Activated B cell treated with CpG ODN at 0.5 μM for 24 hours (primary cell): ENCODE measurements at regions of chr17 and their contacts with region 1.

Region 1: DNA sequence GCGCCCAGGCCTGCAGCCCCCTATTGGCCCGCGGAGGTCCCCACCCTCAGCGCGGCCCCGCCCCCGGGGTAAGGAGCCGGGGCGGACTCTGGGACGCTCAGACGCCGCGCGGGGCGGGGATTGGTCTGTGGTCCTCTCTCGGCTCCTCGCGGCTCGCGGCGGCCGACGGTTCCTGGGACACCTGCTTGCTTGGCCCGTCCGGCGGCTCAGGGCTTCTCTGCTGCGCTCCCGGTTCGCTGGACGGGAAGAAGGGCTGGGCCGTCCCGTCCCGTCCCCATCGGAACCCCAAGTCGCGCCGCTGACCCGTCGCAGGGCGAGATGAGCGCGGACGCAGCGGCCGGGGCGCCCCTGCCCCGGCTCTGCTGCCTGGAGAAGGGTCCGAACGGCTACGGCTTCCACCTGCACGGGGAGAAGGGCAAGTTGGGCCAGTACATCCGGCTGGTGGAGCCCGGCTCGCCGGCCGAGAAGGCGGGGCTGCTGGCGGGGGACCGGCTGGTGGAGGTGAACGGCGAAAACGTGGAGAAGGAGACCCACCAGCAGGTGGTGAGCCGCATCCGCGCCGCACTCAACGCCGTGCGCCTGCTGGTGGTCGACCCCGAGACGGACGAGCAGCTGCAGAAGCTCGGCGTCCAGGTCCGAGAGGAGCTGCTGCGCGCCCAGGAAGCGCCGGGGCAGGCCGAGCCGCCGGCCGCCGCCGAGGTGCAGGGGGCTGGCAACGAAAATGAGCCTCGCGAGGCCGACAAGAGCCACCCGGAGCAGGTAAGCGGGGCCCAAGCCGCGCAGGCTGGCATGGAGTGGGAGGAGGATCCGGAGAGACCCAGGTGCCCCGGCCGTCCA is at the start of gene NHERF1:
- DNase-seq: peak; percentile 97
- ATAC-seq: peak; percentile 96
- H3K4me3 Mint-ChIP-seq: peak within 1 kb of the TSS; percentile 89
- H3K27ac Mint-ChIP-seq: peak within 1 kb of the TSS; percentile 72
- H3K4me1 Mint-ChIP-seq: peaks cover 64% of the 10 kb centered on the region
- H3K27me3 Mint-ChIP-seq: no peaks in the 10 kb centered on the region
- CTCF ChIP-seq: no peak
- total RNA-seq, gene NHERF1: 33.3 and 34.5 TPM in 2 replicates

Region 2: GRCh38 chr17:74736513-74737298 is 12.0 kb before region 1 on chr17 and contains the start of gene RAB37:
- CTCF ChIA-PET with region 1: interaction called, 23 read pairs
- POLR2A ChIA-PET with region 1: interaction called, 76 read pairs
- intact Hi-C with region 1: no loop called
- DNase-seq: peak; percentile 74
- ATAC-seq: peak; percentile 73
- H3K4me3 Mint-ChIP-seq: peak within 1 kb of the TSS; percentile 85
- H3K27ac Mint-ChIP-seq: peak within 1 kb of the TSS; percentile 88
- H3K4me1 Mint-ChIP-seq: peaks cover 49% of the 10 kb centered on the region
- H3K27me3 Mint-ChIP-seq: no peaks in the 10 kb centered on the region
- CTCF ChIP-seq: no peak
- total RNA-seq, gene RAB37: 11.0 and 11.1 TPM in 2 replicates

Region 3: DNA sequence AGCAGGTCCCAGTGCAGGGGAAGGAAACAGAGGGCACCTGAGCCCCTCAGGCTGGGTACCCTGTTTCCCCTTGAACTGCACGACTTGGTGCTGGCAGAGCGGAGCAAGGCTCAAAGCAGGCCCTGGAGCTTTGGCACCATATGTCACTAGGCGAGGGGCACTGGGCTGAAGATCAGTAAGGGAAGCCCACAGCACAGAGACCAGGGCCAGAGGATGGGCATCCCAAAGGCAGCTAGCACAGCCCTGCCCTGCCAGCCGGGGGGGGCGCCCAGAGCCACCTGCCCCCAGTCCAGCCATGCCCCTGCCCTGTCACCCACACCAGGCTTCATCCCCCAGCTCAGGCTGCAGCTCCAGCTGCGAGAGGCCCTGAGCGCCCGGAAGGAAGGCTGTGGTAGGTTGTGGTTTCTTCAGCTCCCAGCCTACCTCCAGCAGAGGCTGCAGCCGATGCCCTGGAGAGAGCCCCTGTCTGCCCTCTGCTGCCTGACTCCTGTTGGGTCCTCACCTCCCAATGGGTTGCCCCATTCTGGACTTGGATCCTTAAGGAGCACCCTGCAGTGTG is 10.6 kb after region 1 on chr17:
- CTCF ChIA-PET with region 1: interaction called, 22 read pairs
- POLR2A ChIA-PET with region 1: interaction called, 22 read pairs
- intact Hi-C with region 1: loop called (anchors 1 kb)
- DNase-seq: no peak
- ATAC-seq: peak; percentile 69
- H3K4me3 Mint-ChIP-seq: peak overlapping the region; percentile 41
- H3K27ac Mint-ChIP-seq: no peak overlapping the region
- H3K4me1 Mint-ChIP-seq: peaks cover 58% of the 10 kb centered on the region
- H3K27me3 Mint-ChIP-seq: no peaks in the 10 kb centered on the region
- CTCF ChIP-seq: no peak

Region 4: DNA sequence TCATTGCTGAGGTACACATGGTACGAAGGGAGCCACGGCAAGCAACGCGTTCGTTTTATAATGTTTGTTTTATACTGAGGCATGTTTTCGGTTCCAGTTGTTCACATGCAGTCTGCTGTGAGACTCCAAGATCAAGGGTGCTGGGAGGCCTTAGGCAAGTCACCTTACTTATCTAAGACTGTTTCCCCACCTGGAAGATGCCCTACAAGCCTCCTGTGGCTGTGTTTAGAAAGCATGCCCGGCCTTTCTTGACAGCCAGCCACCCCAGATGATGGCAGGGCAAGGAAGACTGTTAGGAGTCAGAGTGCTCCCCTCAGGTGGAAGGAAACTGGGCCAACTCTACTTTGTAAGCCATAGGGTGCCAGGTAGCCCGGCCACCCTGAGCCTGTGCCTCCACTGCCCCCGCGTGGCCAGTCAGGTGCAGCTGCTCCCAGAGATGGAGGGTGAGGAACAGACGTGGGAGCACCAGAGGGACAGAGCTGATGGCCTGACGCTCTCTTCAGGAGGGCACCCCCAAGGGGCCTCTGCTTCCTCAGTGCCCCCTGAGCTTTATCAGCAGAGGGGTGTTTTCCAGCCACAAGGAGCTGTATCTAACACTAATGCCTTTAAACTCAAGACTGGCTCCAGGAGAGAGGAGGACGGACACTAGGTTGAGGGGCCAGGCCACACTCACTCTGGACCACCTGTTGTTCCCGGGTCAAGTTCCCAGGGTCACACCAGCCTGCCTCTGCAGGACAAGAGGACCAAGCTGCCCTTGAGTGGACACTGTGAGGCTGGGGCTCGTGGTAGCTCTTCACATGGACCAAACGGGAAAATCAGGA is 22.0 kb after region 1 on chr17:
- CTCF ChIA-PET with region 1: interaction called, 53 read pairs
- POLR2A ChIA-PET with region 1: interaction called, 29 read pairs
- intact Hi-C with region 1: loop called (anchors 1 kb)
- DNase-seq: peak; percentile 57
- ATAC-seq: peak; percentile 97
- H3K4me3 Mint-ChIP-seq: no peak overlapping the region
- H3K27ac Mint-ChIP-seq: peak overlapping the region; percentile 46
- H3K4me1 Mint-ChIP-seq: peaks cover 18% of the 10 kb centered on the region
- H3K27me3 Mint-ChIP-seq: no peaks in the 10 kb centered on the region
- CTCF ChIP-seq: no peak

Region 5: GRCh38 chr17:74776044-74776977 is 27.6 kb after region 1 on chr17 and contains the start of gene NAT9:
- CTCF ChIA-PET with region 1: interaction called, 53 read pairs
- POLR2A ChIA-PET with region 1: interaction called, 29 read pairs
- intact Hi-C with region 1: loop called (anchors 1 kb)
- DNase-seq: peak; percentile 99
- ATAC-seq: peak; percentile 82
- H3K4me3 Mint-ChIP-seq: peak within 1 kb of the TSS; percentile 99
- H3K27ac Mint-ChIP-seq: peak within 1 kb of the TSS; percentile 89
- H3K4me1 Mint-ChIP-seq: peaks cover 61% of the 10 kb centered on the region
- H3K27me3 Mint-ChIP-seq: no peaks in the 10 kb centered on the region
- CTCF ChIP-seq: no peak
- total RNA-seq, gene NAT9: 59.4 and 79.7 TPM in 2 replicates

Region 6: GRCh38 chr17:74790161-74791054 is 41.7 kb after region 1 on chr17:
- CTCF ChIA-PET with region 1: interaction called, 13 read pairs
- POLR2A ChIA-PET with region 1: interaction called, 4 read pairs
- intact Hi-C with region 1: loop called (anchors 1 kb)
- DNase-seq: no peak
- ATAC-seq: no peak
- H3K4me3 Mint-ChIP-seq: no peak overlapping the region
- H3K27ac Mint-ChIP-seq: no peak overlapping the region
- H3K4me1 Mint-ChIP-seq: peaks cover 24% of the 10 kb centered on the region
- H3K27me3 Mint-ChIP-seq: no peaks in the 10 kb centered on the region
- CTCF ChIP-seq: no peak

Region 7: DNA sequence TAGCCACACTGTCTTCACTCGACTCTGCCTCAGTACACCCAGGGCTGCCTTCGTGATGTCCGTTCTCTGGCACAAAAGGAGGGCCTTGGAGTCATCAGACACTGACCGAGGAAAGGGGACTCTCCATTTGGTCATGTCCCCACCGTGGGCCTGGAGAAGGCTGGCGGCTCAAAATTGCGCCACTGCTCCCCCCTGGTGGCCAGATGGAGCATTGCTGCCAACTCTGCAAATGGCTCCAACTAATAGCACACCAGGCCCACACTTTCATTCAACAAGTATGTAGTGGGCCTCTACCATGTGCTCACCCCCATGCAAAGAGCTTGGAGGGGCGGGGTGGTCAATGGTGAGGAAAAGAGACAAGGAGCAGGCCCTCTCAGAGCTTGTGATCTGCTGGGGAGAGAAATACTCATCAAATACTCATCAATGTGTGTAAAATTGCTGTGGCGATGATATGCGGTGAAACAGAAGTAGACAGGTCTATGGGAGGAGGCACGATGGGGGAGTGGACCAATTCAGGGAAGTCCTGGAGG is 116.2 kb after region 1 on chr17:
- CTCF ChIA-PET with region 1: interaction called, 31 read pairs
- POLR2A ChIA-PET with region 1: no interaction called
- intact Hi-C with region 1: loop called (anchors 1 kb)
- DNase-seq: peak; percentile 69
- ATAC-seq: peak; percentile 76
- H3K4me3 Mint-ChIP-seq: no peak overlapping the region
- H3K27ac Mint-ChIP-seq: no peak overlapping the region
- H3K4me1 Mint-ChIP-seq: peaks cover 25% of the 10 kb centered on the region
- H3K27me3 Mint-ChIP-seq: peaks cover 11% of the 10 kb centered on the region
- CTCF ChIP-seq: no peak

Region 8: GRCh38 chr17:74950207-74950606 is 201.5 kb after region 1 on chr17:
- CTCF ChIA-PET with region 1: no interaction called
- POLR2A ChIA-PET with region 1: no interaction called
- intact Hi-C with region 1: no loop called
- DNase-seq: no peak
- ATAC-seq: no peak
- H3K4me3 Mint-ChIP-seq: no peak overlapping the region
- H3K27ac Mint-ChIP-seq: no peak overlapping the region
- H3K4me1 Mint-ChIP-seq: no peaks in the 10 kb centered on the region
- H3K27me3 Mint-ChIP-seq: peaks cover 18% of the 10 kb centered on the region
- CTCF ChIP-seq: no peak

Region 9: GRCh38 chr17:75205037-75205792 is 456.5 kb after region 1 on chr17 and contains the start of gene NUP85:
- CTCF ChIA-PET with region 1: no interaction called
- POLR2A ChIA-PET with region 1: no interaction called
- intact Hi-C with region 1: no loop called
- DNase-seq: peak; percentile 90
- ATAC-seq: peak; percentile 91
- H3K4me3 Mint-ChIP-seq: peak within 1 kb of the TSS; percentile 96
- H3K27ac Mint-ChIP-seq: peak within 1 kb of the TSS; percentile 99
- H3K4me1 Mint-ChIP-seq: peaks cover 22% of the 10 kb centered on the region
- H3K27me3 Mint-ChIP-seq: no peaks in the 10 kb centered on the region
- CTCF ChIP-seq: no peak
- total RNA-seq, gene NUP85: 103 and 107 TPM in 2 replicates